A549 (cell line): ENCODE measurements at regions of chr14 and their contacts with region 1.

Region 1: DNA sequence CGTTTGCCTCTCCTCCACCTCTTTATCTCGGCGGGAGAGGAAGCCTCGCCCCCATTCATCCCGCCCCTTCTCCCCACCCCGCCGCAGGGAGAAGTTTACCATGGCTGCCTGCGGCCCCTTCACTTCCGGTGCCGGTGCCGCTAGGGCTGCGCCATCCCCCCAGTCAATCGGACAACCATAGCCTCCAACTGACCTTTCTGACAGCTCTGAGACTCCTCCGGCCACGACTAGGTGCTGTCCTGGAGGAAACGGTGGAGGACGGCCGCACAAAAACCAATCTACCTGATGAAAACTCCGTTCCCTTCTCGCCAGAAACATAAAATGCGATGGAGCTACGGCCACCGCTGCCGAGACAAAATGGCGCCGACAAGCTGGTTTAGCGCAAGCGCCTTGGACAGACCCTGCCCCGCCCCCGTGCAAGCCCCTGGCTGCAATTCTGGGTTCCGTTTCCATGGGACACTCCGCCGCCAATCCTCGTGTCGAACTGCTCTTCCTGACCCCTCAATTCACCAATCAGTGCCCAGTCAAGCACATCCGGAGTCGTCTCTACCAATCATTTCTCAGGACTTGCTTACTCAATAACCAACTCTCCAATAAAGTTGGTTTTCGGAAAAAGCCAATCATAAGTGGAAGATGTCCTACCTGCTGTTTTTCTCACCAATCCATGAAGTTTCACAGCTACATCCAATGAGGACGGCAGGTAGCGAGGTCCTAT is 436 bp upstream of the ARID4A start:
- DNase-seq: peak; percentile 99 to 100
- ATAC-seq: peak; percentile 92 to 94
- H3K4me3 ChIP-seq: peak overlapping the region; percentile 98
- H3K27ac ChIP-seq: peak overlapping the region; percentile 91 to 94
- H3K4me1 ChIP-seq: peaks cover 23% of the 10 kb centered on the region
- CTCF ChIP-seq: no peak
- EP300 ChIP-seq: no peak
- POLR2A ChIP-seq: peak; percentile 88
- RAD21 ChIP-seq: no peak

Region 2: GRCh38 chr14:58239244-58240195 is 58.4 kb before region 1 on chr14:
- CTCF ChIA-PET with region 1: no interaction called
- POLR2A ChIA-PET with region 1: interaction called, 27 read pairs
- DNase-seq: peak; percentile 16 to 67
- ATAC-seq: peak; percentile 28 to 61; a peak in 4 of 6 replicates
- H3K4me3 ChIP-seq: peak overlapping the region; percentile 65
- H3K27ac ChIP-seq: peak overlapping the region; percentile 45 to 59; a peak in 5 of 6 replicates
- H3K4me1 ChIP-seq: peaks cover 11% of the 10 kb centered on the region
- CTCF ChIP-seq: no peak
- EP300 ChIP-seq: no peak
- POLR2A ChIP-seq: no peak
- RAD21 ChIP-seq: no peak

Region 3: DNA sequence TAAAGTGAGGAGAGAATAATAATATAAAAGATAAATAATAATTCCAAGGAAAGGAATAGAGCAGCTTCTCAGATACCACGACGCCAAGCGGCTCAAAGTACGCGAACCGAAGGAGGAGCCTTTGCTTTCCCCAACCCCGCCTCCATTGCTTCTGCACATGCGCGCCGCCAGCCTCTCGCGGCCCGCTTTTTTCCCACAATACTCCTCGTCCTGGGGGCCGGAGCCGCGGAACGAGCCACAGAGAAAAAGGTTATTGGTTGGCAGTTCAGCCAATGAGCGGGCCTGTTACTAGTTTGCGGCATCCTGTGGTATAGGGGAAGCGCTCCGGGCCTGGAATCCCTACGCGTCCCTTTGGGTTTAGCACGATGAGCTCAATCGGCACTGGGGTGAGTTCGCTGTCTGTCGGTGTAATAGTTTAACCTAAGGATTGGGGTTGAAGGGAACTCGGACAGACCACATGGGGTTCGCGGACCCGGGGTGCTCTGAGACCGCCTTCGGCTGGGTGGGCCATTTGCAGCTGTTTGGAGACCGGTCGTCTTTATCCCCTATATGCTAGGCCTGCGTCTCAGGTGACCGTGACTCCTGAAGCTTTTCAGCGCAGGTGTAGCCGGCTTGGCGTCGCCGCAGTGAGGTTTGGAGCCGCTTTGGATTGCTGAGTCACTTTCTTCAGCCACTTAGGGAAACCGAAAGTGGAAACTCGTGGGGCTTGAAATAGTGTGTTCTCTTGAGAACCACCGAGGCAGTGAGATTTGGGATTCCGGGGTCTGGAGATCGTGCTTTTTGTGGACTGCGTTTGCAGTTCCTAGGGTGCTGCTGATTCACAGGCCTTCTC is 53.1 kb before region 1 on chr14 and contains the start of gene PSMA3:
- CTCF ChIA-PET with region 1: no interaction called
- POLR2A ChIA-PET with region 1: interaction called, 27 read pairs
- DNase-seq: peak; percentile 96
- ATAC-seq: peak; percentile 95 to 97
- H3K4me3 ChIP-seq: peak within 1 kb of the TSS; percentile 60
- H3K27ac ChIP-seq: peak within 1 kb of the TSS; percentile 84 to 98
- H3K4me1 ChIP-seq: peaks cover 27% of the 10 kb centered on the region
- CTCF ChIP-seq: no peak
- EP300 ChIP-seq: no peak
- POLR2A ChIP-seq: peak; percentile 75
- RAD21 ChIP-seq: no peak
- polyA plus RNA-seq, gene PSMA3: 410 and 411 TPM in 2 replicates

Region 4: DNA sequence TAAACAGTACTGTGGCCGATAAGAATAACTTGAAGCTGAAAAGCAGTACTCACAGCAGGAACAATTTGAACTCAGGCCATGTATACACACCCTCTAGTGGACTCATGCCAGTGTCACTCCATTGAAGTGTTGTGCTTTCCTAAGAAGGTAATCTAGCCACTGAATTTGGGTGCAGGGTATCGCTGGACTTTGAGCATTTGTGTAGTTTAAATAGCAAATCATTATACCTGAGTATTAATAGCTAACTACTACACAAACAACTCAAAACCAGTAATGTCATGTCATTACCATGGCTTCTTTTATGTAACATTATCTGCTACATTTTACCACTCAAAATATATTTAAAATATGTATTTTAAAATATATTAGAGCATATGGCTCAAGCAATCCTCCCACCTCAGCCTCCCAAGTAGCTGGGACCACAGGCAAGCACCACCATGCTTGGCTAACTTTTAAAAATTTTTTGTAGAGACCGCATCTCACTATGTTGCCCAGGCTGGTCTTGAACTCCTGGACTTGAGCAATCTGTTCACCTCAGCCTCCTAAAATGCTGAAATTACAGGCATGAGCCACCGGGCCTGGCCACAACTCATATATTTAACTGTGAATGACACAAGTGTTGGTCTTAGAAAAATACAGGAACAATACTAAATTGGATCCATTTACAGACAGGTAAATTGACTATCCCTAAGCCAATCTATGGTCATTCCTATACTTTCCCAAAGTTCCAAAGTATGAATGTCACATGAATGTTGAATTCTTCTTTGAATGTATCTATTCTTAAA is 25.1 kb before region 1 on chr14:
- CTCF ChIA-PET with region 1: no interaction called
- POLR2A ChIA-PET with region 1: interaction called, 12 read pairs
- DNase-seq: peak; percentile 8 to 75
- ATAC-seq: peak; percentile 56 to 66; a peak in 5 of 6 replicates
- H3K4me3 ChIP-seq: no peak overlapping the region
- H3K27ac ChIP-seq: no peak overlapping the region
- H3K4me1 ChIP-seq: peaks cover 32% of the 10 kb centered on the region
- CTCF ChIP-seq: no peak
- EP300 ChIP-seq: no peak
- POLR2A ChIP-seq: no peak
- RAD21 ChIP-seq: 0 out of 5 replicates have a peak, but pooled peaks of 1 of the 2 experiments have one; percentile 4

Region 5: GRCh38 chr14:58287607-58288042 is 10.3 kb before region 1 on chr14:
- CTCF ChIA-PET with region 1: no interaction called
- POLR2A ChIA-PET with region 1: interaction called, 18 read pairs
- DNase-seq: no peak
- ATAC-seq: no peak
- H3K4me3 ChIP-seq: no peak overlapping the region
- H3K27ac ChIP-seq: no peak overlapping the region
- H3K4me1 ChIP-seq: peaks cover 20% of the 10 kb centered on the region
- CTCF ChIP-seq: no peak
- EP300 ChIP-seq: no peak
- POLR2A ChIP-seq: no peak
- RAD21 ChIP-seq: no peak